B cell (primary cell): ENCODE measurements at regions of chr2 and their contacts with region 1.

Region 1: GRCh38 chr2:11778923-11779757 is 32.7 kb downstream of the LPIN1 start:
- DNase-seq: peak; percentile 89
- ATAC-seq: peak; percentile 96
- H3K4me3 ChIP-seq: peak overlapping the region in 3 of 5 experiments; percentile 16 to 55 (median 25)
- H3K4me3 Mint-ChIP-seq: peak overlapping the region; percentile 34
- H3K27ac ChIP-seq: no peak overlapping the region
- H3K27ac Mint-ChIP-seq: no peak overlapping the region
- H3K4me1 ChIP-seq: peaks cover 18 to 26% of the 10 kb centered on the region in 2 donors
- H3K4me1 Mint-ChIP-seq: peaks cover 36% of the 10 kb centered on the region
- H3K27me3 ChIP-seq: no peaks in the 10 kb centered on the region
- H3K27me3 Mint-ChIP-seq: no peaks in the 10 kb centered on the region
- CTCF ChIP-seq: peak; percentile 97

Region 2: DNA sequence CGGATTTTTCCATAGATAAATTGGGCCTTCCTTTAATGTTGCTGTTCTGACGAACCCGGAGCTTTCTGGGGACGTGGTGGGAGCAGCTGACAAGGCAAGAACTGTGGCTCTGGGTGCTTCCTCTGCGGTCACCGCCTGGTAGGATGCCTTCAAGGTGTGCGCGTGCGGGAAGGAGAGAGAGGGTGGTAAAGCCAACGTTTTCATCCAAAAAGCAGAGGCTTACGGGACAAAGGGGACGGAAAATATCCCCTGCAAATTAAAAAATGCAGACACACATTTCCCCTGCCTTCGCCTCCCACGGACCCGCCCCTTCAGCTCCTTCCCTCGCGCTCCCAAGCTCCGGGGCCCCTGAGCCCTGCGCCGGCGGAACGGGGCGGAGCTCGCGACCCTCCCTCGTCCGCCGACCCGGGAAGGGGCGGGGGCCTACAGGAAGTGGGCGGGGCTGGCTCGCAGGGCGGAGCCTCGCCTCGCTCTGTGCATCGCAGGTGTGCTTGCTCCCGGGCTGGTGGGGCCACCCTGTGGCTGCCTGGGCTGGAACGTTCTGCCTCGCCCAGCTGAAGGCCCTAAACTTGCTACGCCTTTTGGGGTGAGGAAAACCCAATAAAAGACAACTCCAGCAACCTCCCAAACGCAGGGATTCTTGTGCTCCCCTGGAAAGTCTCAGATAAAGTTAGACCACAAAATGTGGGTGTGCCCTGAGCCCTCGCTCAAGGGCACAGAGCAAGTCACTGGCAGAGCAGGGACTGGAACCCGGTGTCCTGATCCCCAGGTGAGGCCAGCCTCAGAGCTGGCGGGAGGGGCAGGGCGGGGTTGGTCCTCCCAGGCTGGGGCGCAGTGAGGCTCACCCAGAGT is 649.3 kb before region 1 on chr2:
- CTCF ChIA-PET with region 1: interaction called, 3 read pairs
- POLR2A ChIA-PET with region 1: no interaction called
- intact Hi-C with region 1: loop called (anchors 1 kb)
- DNase-seq: peak; percentile 83
- ATAC-seq: peak; percentile 85
- H3K4me3 ChIP-seq: peak overlapping the region; percentile 35 to 60 (median 52)
- H3K4me3 Mint-ChIP-seq: peak overlapping the region; percentile 83
- H3K27ac ChIP-seq: peak overlapping the region; percentile 8 to 34
- H3K27ac Mint-ChIP-seq: peak overlapping the region; percentile 80
- H3K4me1 ChIP-seq: peaks cover 24 to 38% of the 10 kb centered on the region in 2 donors
- H3K4me1 Mint-ChIP-seq: peaks cover 36% of the 10 kb centered on the region
- H3K27me3 ChIP-seq: peaks cover 0 to 15% (median 2%) of the 10 kb centered on the region in 4 experiments
- H3K27me3 Mint-ChIP-seq: peaks cover 4% of the 10 kb centered on the region
- CTCF ChIP-seq: peak; percentile 22

Region 3: DNA sequence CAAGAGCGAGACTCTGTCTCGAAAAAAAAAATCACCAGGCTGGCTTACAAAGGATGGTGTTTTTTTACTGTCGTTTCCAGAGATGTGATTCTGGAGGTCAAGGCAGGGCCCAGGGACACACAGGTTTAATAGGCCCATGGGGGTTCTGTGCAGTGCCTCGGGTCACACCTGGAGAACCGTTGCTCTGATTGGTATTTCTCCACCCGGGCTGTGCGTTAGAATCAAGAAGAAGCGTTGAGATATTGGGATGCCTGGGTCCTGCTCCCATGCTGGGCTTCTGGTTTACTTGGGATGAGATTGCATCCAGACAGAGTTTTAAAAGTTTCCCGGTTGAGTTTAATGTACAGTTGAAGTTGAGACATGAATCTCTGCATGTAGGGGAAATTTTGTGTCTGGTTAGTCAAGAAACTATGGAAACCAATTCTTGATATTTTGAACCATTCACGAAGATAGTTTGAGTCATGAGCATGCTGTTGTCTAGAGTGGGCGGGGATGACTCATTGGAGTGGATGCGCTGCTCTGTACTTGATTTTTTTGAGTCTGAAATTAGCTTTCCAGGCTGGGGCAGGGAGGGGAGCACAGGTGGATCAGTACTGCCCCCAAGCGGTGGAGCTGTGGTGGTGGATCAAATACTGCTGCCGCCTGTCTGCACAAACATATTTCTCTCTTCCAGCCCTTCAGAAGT is 195.2 kb before region 1 on chr2:
- CTCF ChIA-PET with region 1: interaction called, 10 read pairs
- POLR2A ChIA-PET with region 1: no interaction called
- intact Hi-C with region 1: no loop called
- DNase-seq: peak; percentile 49
- ATAC-seq: peak; percentile 49
- H3K4me3 ChIP-seq: no peak overlapping the region
- H3K4me3 Mint-ChIP-seq: no peak overlapping the region
- H3K27ac ChIP-seq: no peak overlapping the region
- H3K27ac Mint-ChIP-seq: no peak overlapping the region
- H3K4me1 ChIP-seq: no peaks in the 10 kb centered on the region
- H3K4me1 Mint-ChIP-seq: no peaks in the 10 kb centered on the region
- H3K27me3 ChIP-seq: peaks cover 0 to 12% (median 3%) of the 10 kb centered on the region in 4 experiments
- H3K27me3 Mint-ChIP-seq: peaks cover 16% of the 10 kb centered on the region
- CTCF ChIP-seq: peak; percentile 68

Region 4: GRCh38 chr2:11701751-11702301 is 77.3 kb before region 1 on chr2:
- CTCF ChIA-PET with region 1: interaction called, 209 read pairs
- POLR2A ChIA-PET with region 1: interaction called, 4 read pairs
- intact Hi-C with region 1: no loop called
- DNase-seq: peak; percentile 87
- ATAC-seq: peak; percentile 79
- H3K4me3 ChIP-seq: no peak overlapping the region
- H3K4me3 Mint-ChIP-seq: no peak overlapping the region
- H3K27ac ChIP-seq: peak overlapping the region in 1 of 2 donors; percentile 10
- H3K27ac Mint-ChIP-seq: no peak overlapping the region
- H3K4me1 ChIP-seq: peaks cover 14 to 17% of the 10 kb centered on the region in 2 donors
- H3K4me1 Mint-ChIP-seq: no peaks in the 10 kb centered on the region
- H3K27me3 ChIP-seq: peaks cover 0 to 15% (median 2%) of the 10 kb centered on the region in 4 experiments
- H3K27me3 Mint-ChIP-seq: peaks cover under 1% of the 10 kb centered on the region
- CTCF ChIP-seq: no peak

Region 5: GRCh38 chr2:11743846-11744553 is 35.1 kb before region 1 on chr2:
- CTCF ChIA-PET with region 1: interaction called, 411 read pairs
- POLR2A ChIA-PET with region 1: interaction called, 4 read pairs
- intact Hi-C with region 1: loop called (anchors 2 kb)
- DNase-seq: peak; percentile 72
- ATAC-seq: peak; percentile 43
- H3K4me3 ChIP-seq: peak overlapping the region in 2 of 5 experiments; percentile 3 to 17
- H3K4me3 Mint-ChIP-seq: peak overlapping the region; percentile 63
- H3K27ac ChIP-seq: no peak overlapping the region
- H3K27ac Mint-ChIP-seq: peak overlapping the region; percentile 85
- H3K4me1 ChIP-seq: peaks cover 37 to 52% of the 10 kb centered on the region in 2 donors
- H3K4me1 Mint-ChIP-seq: peaks cover 49% of the 10 kb centered on the region
- H3K27me3 ChIP-seq: no peaks in the 10 kb centered on the region
- H3K27me3 Mint-ChIP-seq: no peaks in the 10 kb centered on the region
- CTCF ChIP-seq: no peak

Region 6: DNA sequence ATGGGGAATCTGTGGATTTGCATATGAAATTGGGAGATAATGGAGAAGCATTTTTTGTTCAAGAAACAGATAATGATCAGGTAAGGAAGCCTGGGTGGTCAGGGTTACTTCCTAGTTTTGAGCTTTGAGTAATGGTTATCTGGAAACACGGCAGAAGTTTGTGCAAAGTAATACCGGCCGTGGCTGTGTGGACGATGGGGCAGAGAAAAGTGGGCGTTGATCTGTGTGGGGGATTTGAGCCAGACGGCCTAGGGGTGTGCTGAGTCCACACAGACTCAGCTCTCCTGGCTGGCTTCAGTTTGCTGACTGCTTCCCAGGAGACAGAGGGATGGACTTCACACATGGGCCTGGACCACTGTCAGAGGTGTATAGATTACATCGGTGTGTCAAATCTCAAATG is 11.4 kb before region 1 on chr2:
- CTCF ChIA-PET with region 1: interaction called, 13 read pairs
- POLR2A ChIA-PET with region 1: no interaction called
- intact Hi-C with region 1: no loop called
- DNase-seq: no peak
- ATAC-seq: no peak
- H3K4me3 ChIP-seq: no peak overlapping the region
- H3K4me3 Mint-ChIP-seq: no peak overlapping the region
- H3K27ac ChIP-seq: no peak overlapping the region
- H3K27ac Mint-ChIP-seq: no peak overlapping the region
- H3K4me1 ChIP-seq: peaks cover 0 to 3% of the 10 kb centered on the region in 2 donors
- H3K4me1 Mint-ChIP-seq: peaks cover 1% of the 10 kb centered on the region
- H3K27me3 ChIP-seq: no peaks in the 10 kb centered on the region
- H3K27me3 Mint-ChIP-seq: no peaks in the 10 kb centered on the region
- CTCF ChIP-seq: no peak

Region 7: GRCh38 chr2:13266166-13266565 is 1487.0 kb after region 1 on chr2:
- CTCF ChIA-PET with region 1: no interaction called
- POLR2A ChIA-PET with region 1: no interaction called
- intact Hi-C with region 1: no loop called
- DNase-seq: no peak
- ATAC-seq: no peak
- H3K4me3 ChIP-seq: no peak overlapping the region
- H3K4me3 Mint-ChIP-seq: no peak overlapping the region
- H3K27ac ChIP-seq: no peak overlapping the region
- H3K27ac Mint-ChIP-seq: no peak overlapping the region
- H3K4me1 ChIP-seq: no peaks in the 10 kb centered on the region
- H3K4me1 Mint-ChIP-seq: no peaks in the 10 kb centered on the region
- H3K27me3 ChIP-seq: no peaks in the 10 kb centered on the region
- H3K27me3 Mint-ChIP-seq: no peaks in the 10 kb centered on the region
- CTCF ChIP-seq: no peak